Calu3 (cell line): ENCODE measurements at regions of chr5 and their contacts with region 1.

Region 1: GRCh38 chr5:157743163-157744050 is at the start of gene LSM11:
- DNase-seq: peak; percentile 95
- H3K4me3 Mint-ChIP-seq: peak within 1 kb of the TSS; percentile 82
- H3K27ac Mint-ChIP-seq: peak within 1 kb of the TSS; percentile 88
- H3K4me1 Mint-ChIP-seq: peaks cover 22% of the 10 kb centered on the region
- H3K27me3 Mint-ChIP-seq: no peaks in the 10 kb centered on the region
- CTCF ChIP-seq: peak; percentile 100
- total RNA-seq, gene LSM11: 4.5 and 4.6 TPM in 2 replicates

Region 2: GRCh38 chr5:157148734-157149615 is 594.4 kb before region 1 on chr5:
- CTCF ChIA-PET with region 1: no interaction called
- intact Hi-C with region 1: loop called (anchors 1 kb)
- DNase-seq: peak; percentile 86
- H3K4me3 Mint-ChIP-seq: no peak overlapping the region
- H3K27ac Mint-ChIP-seq: peak overlapping the region; percentile 50
- H3K4me1 Mint-ChIP-seq: peaks cover 10% of the 10 kb centered on the region
- H3K27me3 Mint-ChIP-seq: no peaks in the 10 kb centered on the region
- CTCF ChIP-seq: peak; percentile 88

Region 3: DNA sequence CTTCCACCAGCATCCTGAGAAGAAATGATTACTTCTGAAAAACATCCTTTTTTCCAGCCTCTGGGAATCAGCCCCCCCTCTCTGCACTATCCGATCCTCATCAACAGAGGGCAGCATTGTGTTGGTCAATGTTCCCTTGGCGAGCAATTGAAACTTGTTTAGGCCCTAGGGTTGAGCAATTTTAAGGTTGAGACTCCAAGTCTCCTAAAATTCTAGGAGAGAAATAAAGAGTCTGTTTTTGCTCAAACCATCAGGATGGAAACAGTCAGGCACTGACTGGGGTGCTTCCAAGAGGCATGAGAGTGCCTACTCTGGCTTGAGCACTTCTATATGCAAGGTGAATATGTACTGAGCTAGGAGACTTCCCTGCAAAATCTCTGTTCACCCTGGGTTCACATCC is 489.9 kb before region 1 on chr5:
- CTCF ChIA-PET with region 1: no interaction called
- intact Hi-C with region 1: loop called (anchors 10 kb)
- DNase-seq: peak; percentile 72
- H3K4me3 Mint-ChIP-seq: no peak overlapping the region
- H3K27ac Mint-ChIP-seq: no peak overlapping the region
- H3K4me1 Mint-ChIP-seq: no peaks in the 10 kb centered on the region
- H3K27me3 Mint-ChIP-seq: peaks cover 15% of the 10 kb centered on the region
- CTCF ChIP-seq: peak; percentile 95

Region 4: GRCh38 chr5:157665467-157666100 is 77.8 kb before region 1 on chr5:
- CTCF ChIA-PET with region 1: interaction called, 7 read pairs
- intact Hi-C with region 1: loop called (anchors 1 kb)
- DNase-seq: peak; percentile 63
- H3K4me3 Mint-ChIP-seq: no peak overlapping the region
- H3K27ac Mint-ChIP-seq: no peak overlapping the region
- H3K4me1 Mint-ChIP-seq: peaks cover 19% of the 10 kb centered on the region
- H3K27me3 Mint-ChIP-seq: no peaks in the 10 kb centered on the region
- CTCF ChIP-seq: no peak

Region 5: GRCh38 chr5:157731272-157732129 is 11.9 kb before region 1 on chr5 and contains the start of gene THG1L:
- CTCF ChIA-PET with region 1: interaction called, 10 read pairs
- intact Hi-C with region 1: no loop called
- DNase-seq: peak; percentile 99
- H3K4me3 Mint-ChIP-seq: peak within 1 kb of the TSS; percentile 89
- H3K27ac Mint-ChIP-seq: peak within 1 kb of the TSS; percentile 97
- H3K4me1 Mint-ChIP-seq: peaks cover 9% of the 10 kb centered on the region
- H3K27me3 Mint-ChIP-seq: no peaks in the 10 kb centered on the region
- CTCF ChIP-seq: no peak
- total RNA-seq, gene THG1L: 11.0 and 16.2 TPM in 2 replicates

Region 6: GRCh38 chr5:158013939-158014338 is 270.5 kb after region 1 on chr5:
- CTCF ChIA-PET with region 1: no interaction called
- intact Hi-C with region 1: no loop called
- DNase-seq: peak; percentile 34
- H3K4me3 Mint-ChIP-seq: no peak overlapping the region
- H3K27ac Mint-ChIP-seq: no peak overlapping the region
- H3K4me1 Mint-ChIP-seq: no peaks in the 10 kb centered on the region
- H3K27me3 Mint-ChIP-seq: peaks cover 12% of the 10 kb centered on the region
- CTCF ChIP-seq: no peak